ENCODE measurements at regions of chr4 and their contacts with region 1.

Region 1: GRCh38 chr4:78684325-78685079 is 91.6 kb upstream of the BMP2K start:
- DNase-seq: no peak

Region 2: DNA sequence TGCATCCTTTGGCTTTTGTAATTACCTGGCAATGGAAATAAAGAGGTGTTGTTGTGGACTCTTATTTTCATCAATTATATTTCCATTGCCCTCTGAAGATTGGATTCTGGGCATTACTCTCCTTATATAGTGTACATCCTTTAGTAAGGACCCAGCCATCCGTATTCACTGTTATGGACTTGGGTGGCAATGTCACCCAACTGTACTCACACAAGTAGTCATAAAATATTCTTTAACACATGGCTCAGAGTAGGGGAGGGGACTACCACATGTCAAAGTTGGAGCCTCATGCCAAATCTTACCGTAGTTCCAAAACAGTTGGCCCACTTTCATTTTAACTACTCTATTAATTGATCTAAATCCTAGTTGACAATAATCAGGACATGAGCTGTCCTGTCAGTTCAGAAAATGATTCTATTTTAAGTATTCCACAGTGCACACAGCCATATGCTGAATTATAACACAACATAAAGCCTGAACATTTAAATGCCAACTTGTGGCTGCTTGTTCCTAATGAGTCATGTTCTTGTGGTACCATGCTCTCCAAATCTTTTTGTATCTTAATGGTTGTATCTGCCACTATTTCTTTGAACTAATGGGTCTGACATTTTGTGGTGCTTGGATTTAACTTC is 622.4 kb before region 1 on chr4:
- intact Hi-C with region 1: loop called in 1 of 2 experiments (anchors 5 kb)
- DNase-seq: no peak

Region 3: GRCh38 chr4:78644744-78645330 is 39.7 kb before region 1 on chr4:
- intact Hi-C with region 1: no loop called
- DNase-seq: no peak